ENCODE measurements at regions of chr12 and their contacts with region 1.

Region 1: GRCh38 chr12:52295663-52296062 is 4.3 kb upstream of the KRT81 start:
- DNase-seq: no peak
- H3K4me3 ChIP-seq: no peak overlapping the region
- H3K4me3 Mint-ChIP-seq: no peak overlapping the region
- H3K27ac Mint-ChIP-seq: no peak overlapping the region
- H3K4me1 ChIP-seq: no peaks in the 10 kb centered on the region
- H3K4me1 Mint-ChIP-seq: no peaks in the 10 kb centered on the region
- H3K27me3 ChIP-seq: no peaks in the 10 kb centered on the region
- H3K27me3 Mint-ChIP-seq: peaks cover 15% of the 10 kb centered on the region
- CTCF ChIP-seq: no peak

Region 2: GRCh38 chr12:52319097-52319496 is 23.4 kb after region 1 on chr12:
- CTCF ChIA-PET with region 1: no interaction called
- POLR2A ChIA-PET with region 1: no interaction called
- intact Hi-C with region 1: loop called (anchors 1 kb)
- DNase-seq: peak in 1 of 2 experiments; percentile 35
- H3K4me3 ChIP-seq: no peak overlapping the region
- H3K4me3 Mint-ChIP-seq: no peak overlapping the region
- H3K27ac Mint-ChIP-seq: no peak overlapping the region
- H3K4me1 ChIP-seq: no peaks in the 10 kb centered on the region
- H3K4me1 Mint-ChIP-seq: peaks cover 6% of the 10 kb centered on the region
- H3K27me3 ChIP-seq: no peaks in the 10 kb centered on the region; the same call in 1 of the 2 replicates
- H3K27me3 Mint-ChIP-seq: peaks cover 2% of the 10 kb centered on the region
- CTCF ChIP-seq: peak; percentile 22 to 35